Activated CD4-positive, alpha-beta T cell treated with anti-CD3 and anti-CD28 coated beads for 36 hours (primary cell): ENCODE measurements at regions of chr2 and their contacts with region 1.

Region 1: DNA sequence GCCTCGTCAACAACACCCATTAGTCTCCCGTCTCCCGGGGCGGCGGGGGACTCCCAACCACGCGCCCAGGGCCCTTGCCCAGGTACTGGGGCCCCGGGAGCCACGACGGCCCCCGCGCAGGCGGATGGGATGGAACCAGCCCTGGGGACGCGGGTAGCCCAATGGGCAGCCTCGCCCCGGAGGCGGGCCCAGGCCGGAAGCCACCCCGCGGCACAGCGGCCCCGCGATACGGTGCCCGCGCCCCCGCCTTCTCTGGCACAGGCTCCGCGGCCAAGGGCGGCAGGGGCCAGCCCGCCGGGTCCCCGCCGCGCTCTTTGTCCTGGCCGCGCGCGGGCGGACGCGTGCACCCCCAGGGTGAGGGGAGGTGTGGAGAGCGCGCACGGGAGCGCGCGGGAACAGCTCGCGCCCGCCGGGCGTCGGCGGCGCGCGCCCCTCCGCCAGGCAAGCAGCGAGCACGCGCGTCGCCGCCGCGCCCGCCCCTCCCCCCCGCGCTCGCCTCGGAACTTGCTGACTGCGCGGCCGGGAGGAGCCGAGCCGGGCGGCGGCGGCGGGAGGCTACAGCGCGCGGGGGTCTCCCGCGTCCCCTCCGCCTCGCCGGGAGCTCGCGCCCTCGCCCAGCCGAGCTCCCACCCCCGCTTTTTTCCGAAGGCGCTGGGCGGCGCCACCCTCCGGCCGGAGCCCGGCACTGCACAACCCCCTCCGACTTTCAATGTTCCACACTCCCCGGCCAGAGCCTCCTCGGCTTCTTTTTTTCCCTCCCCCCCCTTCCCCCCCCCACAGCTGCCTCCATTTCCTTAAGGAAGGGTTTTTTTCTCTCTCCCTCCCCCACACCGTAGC is at the start of gene UBE2E3:
- DNase-seq: peak; percentile 88
- ATAC-seq: peak; percentile 86
- H3K4me3 Mint-ChIP-seq: peak within 1 kb of the TSS; percentile 94
- H3K27ac Mint-ChIP-seq: peak within 1 kb of the TSS; percentile 95
- H3K4me1 Mint-ChIP-seq: peaks cover 40% of the 10 kb centered on the region
- H3K27me3 Mint-ChIP-seq: no peaks in the 10 kb centered on the region
- total RNA-seq, gene UBE2E3: 37.0 to 69.6 TPM

Region 2: DNA sequence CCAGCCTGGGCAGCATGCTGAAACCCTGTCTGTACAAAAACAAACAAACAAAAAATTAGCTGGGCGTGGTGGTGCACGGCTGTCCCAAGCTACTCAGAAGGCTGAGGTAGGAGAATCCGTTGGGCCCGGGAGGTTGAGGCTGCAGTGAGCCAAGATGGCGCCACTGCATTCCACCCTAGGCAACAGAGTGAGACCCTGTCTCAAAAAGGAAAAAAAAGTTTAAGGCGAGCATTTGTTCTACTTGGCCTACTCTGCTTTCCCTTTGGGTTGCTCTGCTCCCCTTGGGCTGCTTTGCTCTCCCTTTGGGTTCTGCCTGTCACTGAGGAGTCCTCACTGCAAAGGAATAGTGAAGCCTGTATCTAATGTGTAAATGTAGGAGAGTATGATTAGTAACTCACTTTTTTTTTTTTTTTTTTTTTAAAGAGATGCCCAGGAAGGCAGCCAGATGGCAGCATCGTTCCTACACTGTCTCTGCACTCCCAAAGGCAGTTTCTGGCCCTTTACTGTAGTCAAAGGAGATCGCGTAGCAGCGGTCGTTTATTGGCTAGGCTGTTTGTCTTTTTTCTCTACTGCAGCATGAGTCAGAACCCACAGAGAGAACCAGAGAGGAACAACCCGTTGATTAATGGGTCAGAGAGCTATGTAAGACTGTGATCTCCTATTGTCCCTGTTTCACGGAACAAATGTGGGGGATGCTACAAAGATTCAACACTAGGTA is 854.9 kb before region 1 on chr2:
- CTCF ChIA-PET with region 1: no interaction called
- POLR2A ChIA-PET with region 1: no interaction called
- intact Hi-C with region 1: loop called in 1 of 2 experiments (anchors 2 kb)
- DNase-seq: peak; percentile 60
- ATAC-seq: peak; percentile 88
- H3K4me3 Mint-ChIP-seq: no peak overlapping the region
- H3K27ac Mint-ChIP-seq: no peak overlapping the region
- H3K4me1 Mint-ChIP-seq: peaks cover 1% of the 10 kb centered on the region
- H3K27me3 Mint-ChIP-seq: peaks cover 7% of the 10 kb centered on the region

Region 3: GRCh38 chr2:180949896-180950295 is 30.4 kb before region 1 on chr2:
- CTCF ChIA-PET with region 1: no interaction called
- POLR2A ChIA-PET with region 1: no interaction called
- intact Hi-C with region 1: loop called in 1 of 2 experiments (anchors 2 kb)
- DNase-seq: no peak
- ATAC-seq: no peak
- H3K4me3 Mint-ChIP-seq: no peak overlapping the region
- H3K27ac Mint-ChIP-seq: no peak overlapping the region
- H3K4me1 Mint-ChIP-seq: peaks cover 3% of the 10 kb centered on the region
- H3K27me3 Mint-ChIP-seq: peaks cover 17% of the 10 kb centered on the region

Region 4: DNA sequence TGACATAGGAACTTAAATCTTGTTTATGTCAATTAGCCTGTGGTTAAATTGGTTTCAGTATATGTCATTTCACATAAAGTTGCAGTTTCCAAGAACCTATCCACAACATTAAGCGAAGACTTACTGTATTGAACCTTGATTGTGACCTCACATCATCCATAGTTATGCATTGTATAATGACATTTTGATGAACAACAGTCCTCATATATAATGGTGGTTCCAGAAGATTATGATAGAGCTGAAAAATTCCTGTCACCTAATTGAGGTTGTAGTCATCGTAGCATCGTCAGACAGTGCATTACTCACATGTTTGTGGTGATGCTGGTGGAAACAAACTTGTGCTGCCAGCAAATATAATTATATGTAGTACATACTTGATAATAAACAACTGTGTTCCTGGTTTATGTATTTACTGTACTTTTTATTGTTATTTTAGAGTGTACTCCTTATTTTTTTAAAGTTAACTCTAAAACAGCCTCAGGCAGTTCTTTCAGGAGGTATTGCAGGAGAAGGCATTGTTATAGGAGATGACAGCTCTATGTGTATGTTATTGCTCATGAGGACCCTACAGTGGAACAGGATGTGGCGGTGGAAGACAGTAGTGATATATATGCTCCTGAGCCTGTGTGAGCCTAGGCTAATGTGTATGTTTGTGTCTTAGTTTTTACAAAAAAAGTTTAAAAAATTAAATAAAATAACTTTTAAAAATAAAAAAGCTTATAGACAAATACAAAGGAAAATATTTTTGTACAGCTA is 56.7 kb after region 1 on chr2:
- CTCF ChIA-PET with region 1: interaction called, 3 read pairs
- POLR2A ChIA-PET with region 1: no interaction called
- intact Hi-C with region 1: loop called (anchors 2 kb)
- DNase-seq: peak; percentile 40
- ATAC-seq: peak; percentile 88
- H3K4me3 Mint-ChIP-seq: no peak overlapping the region
- H3K27ac Mint-ChIP-seq: no peak overlapping the region
- H3K4me1 Mint-ChIP-seq: peaks cover 22% of the 10 kb centered on the region
- H3K27me3 Mint-ChIP-seq: no peaks in the 10 kb centered on the region

Region 5: GRCh38 chr2:181174611-181175580 is 194.6 kb after region 1 on chr2:
- CTCF ChIA-PET with region 1: no interaction called
- POLR2A ChIA-PET with region 1: no interaction called
- intact Hi-C with region 1: no loop called
- DNase-seq: no peak
- ATAC-seq: no peak
- H3K4me3 Mint-ChIP-seq: no peak overlapping the region
- H3K27ac Mint-ChIP-seq: no peak overlapping the region
- H3K4me1 Mint-ChIP-seq: peaks cover 50% of the 10 kb centered on the region
- H3K27me3 Mint-ChIP-seq: no peaks in the 10 kb centered on the region

Region 6: DNA sequence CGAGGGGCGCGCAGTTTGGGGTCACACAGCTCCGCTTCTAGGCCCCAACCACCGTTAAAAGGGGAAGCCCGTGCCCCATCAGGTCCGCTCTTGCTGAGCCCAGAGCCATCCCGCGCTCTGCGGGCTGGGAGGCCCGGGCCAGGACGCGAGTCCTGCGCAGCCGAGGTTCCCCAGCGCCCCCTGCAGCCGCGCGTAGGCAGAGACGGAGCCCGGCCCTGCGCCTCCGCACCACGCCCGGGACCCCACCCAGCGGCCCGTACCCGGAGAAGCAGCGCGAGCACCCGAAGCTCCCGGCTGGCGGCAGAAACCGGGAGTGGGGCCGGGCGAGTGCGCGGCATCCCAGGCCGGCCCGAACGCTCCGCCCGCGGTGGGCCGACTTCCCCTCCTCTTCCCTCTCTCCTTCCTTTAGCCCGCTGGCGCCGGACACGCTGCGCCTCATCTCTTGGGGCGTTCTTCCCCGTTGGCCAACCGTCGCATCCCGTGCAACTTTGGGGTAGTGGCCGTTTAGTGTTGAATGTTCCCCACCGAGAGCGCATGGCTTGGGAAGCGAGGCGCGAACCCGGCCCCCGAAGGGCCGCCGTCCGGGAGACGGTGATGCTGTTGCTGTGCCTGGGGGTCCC is 476.9 kb after region 1 on chr2 and contains the start of gene ITGA4:
- CTCF ChIA-PET with region 1: interaction called, 3 read pairs
- POLR2A ChIA-PET with region 1: no interaction called
- intact Hi-C with region 1: loop called in 1 of 2 experiments (anchors 5 kb)
- DNase-seq: peak; percentile 93
- ATAC-seq: peak; percentile 86
- H3K4me3 Mint-ChIP-seq: peak within 1 kb of the TSS; percentile 91
- H3K27ac Mint-ChIP-seq: peak within 1 kb of the TSS; percentile 95
- H3K4me1 Mint-ChIP-seq: peaks cover 53% of the 10 kb centered on the region
- H3K27me3 Mint-ChIP-seq: no peaks in the 10 kb centered on the region
- total RNA-seq, gene ITGA4: 27.7 to 33.6 TPM

Region 7: DNA sequence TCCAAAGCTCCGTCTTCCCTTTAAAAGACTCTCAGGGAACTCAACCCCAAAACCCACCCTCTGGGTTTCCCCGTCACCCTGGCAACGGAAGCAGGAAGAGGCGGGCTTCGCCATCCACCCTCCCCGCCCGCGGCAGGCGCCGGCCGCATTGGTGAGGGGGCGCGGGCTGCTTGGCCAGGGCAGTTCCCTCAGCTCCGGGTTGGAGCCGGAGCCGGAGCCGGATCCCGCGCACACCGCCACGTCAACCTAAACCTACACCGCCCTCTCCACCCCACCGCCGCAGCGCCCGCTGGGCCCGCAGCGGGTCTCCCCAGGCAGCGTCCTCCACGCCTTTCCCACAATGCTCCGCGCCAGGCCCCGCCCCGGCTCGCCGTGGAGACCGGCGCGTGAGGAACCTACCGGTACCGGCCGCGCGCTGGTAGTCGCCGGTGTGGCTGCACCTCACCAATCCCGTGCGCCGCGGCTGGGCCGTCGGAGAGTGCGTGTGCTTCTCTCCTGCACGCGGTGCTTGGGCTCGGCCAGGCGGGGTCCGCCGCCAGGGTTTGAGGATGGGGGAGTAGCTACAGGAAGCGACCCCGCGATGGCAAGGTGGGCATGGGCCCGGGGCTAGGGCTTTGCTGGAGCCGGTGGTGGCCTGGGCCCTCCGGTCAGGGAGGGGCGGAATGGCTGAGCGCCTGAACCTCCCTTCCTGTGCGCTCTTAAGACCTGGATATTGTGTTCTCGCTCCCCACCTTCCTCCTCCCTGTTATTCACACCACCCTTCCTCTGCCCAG is 1735.8 kb after region 1 on chr2 and contains the start of gene DNAJC10:
- CTCF ChIA-PET with region 1: no interaction called
- POLR2A ChIA-PET with region 1: interaction called, 7 read pairs
- intact Hi-C with region 1: loop called in 1 of 2 experiments (anchors 5 kb)
- DNase-seq: peak; percentile 91
- ATAC-seq: peak; percentile 92
- H3K4me3 Mint-ChIP-seq: no peak within 1 kb of the TSS
- H3K27ac Mint-ChIP-seq: no peak within 1 kb of the TSS
- H3K4me1 Mint-ChIP-seq: peaks cover 3% of the 10 kb centered on the region
- H3K27me3 Mint-ChIP-seq: peaks cover under 1% of the 10 kb centered on the region
- total RNA-seq, gene DNAJC10: 41.7 to 48.9 TPM